Heart right ventricle (tissue), 16 donors: ENCODE measurements at regions of chr4 and their contacts with region 1.

Region 1: DNA sequence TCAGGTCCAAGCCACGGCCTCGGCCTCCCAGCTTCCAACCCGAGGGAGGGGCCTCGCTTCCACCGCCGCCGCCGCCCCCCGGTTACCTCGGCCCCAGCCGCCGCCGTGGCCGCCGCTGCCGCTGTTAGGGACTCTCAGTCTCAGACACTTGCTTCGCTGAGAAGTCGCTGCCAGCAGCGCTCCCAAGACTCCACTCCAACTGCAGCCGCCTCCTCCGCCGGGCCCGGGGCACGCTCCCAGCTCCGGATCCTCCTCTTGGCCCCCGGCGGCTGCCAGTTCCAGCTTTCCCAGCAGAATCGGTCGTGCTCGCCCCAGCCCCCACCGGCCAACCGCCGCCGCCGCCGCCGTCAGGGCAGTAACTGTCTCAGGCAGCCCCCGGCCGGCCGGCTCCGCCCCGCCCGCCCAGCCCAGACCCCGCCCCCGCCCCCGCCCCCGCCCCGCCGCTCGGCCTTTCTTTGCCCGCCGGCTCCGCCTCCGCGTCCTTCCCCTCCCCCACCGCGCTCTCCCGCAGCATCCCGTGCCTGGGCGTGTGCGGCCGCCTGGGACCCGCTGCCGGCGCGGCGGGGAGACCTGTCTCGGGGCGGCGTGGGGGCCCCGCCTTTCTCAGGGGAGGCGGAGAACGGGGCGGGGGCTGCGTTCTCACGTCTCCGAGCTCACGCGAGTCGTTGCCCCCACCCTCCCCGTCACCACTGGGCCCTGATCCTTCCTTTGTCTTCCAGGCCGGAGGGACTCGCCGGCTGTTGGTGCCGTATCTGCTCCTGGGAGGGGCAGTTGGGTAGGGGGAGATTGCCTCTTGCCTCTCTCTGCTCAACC is at the start of gene ANKRD50:
- DNase-seq: peak; percentile 92
- ATAC-seq: peak; percentile 88 to 98 (median 92)
- H3K4me3 ChIP-seq: peak within 1 kb of the TSS; percentile 72 to 93 (median 88)
- H3K27ac ChIP-seq: peak within 1 kb of the TSS; percentile 84 to 99 (median 97)
- H3K4me1 ChIP-seq: peaks cover 0 to 47% (median 20%) of the 10 kb centered on the region in 9 donors
- H3K27me3 ChIP-seq: no peaks in the 10 kb centered on the region
- CTCF ChIP-seq: no peak
- total RNA-seq, gene ANKRD50: 5.2 to 20.1 (median 8.5) TPM

Region 2: DNA sequence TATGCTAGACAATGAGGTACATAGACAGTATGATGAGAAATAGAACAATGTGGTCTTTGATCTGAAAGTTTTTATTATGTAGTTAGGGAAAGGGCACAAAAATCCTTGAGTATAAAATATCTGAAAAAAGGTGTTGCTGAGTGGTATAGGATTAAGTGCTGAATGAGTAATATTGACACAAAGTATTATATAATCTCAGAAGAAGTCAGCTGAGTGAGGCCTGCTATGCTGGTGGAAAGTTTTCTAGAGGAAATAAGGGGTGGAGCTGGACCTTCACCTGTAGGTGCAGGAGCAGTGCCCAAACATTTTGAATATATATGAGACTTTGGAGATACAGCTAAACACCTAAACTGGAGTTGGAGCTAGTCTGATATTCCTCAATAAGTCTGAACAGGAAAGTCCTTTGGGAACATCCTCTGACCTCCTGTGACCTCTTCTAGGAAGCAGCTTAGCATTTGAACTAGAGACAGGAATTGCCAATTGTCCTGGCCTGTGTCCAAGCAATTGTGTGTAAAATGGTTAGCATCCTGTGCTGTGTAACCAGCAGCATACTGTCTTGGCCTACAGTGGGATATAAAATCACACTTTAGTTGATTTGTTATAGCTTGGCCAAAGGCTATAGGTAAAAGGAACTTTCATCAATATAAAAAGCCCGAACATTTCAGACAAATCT is 285.3 kb before region 1 on chr4:
- intact Hi-C with region 1: loop called in 1 of 10 experiments (anchors 5 kb)
- DNase-seq: peak in 1 of 2 donors; percentile 85
- ATAC-seq: peak; percentile 45 to 95 (median 86)
- H3K4me3 ChIP-seq: no peak overlapping the region
- H3K27ac ChIP-seq: peak overlapping the region in 6 of 10 donors; percentile 1 to 67 (median 34)
- H3K4me1 ChIP-seq: peaks cover 0 to 33% (median 9%) of the 10 kb centered on the region in 9 donors
- H3K27me3 ChIP-seq: no peaks in the 10 kb centered on the region
- CTCF ChIP-seq: no peak

Region 3: DNA sequence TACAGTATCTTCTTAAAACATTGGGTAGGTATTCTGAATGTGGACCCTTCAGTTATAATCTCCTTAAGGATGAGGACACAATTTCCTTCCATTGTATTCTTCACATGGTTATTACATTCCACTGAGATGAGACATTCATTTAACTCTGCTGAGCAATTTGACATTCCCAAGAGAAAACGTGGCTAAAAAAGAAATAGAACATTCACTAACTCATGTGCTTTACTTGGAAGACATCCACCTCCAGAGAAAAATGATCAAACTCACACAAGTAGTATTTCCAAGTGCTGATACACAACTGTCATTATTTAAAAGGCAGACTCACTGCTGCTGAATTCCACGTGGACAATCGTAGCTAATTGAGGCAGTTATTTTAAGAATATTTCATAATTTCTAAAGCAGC is 227.8 kb after region 1 on chr4:
- intact Hi-C with region 1: loop called in 6 of 10 experiments (anchors 5 to 10 kb)
- DNase-seq: peak in 1 of 2 donors; percentile 15
- ATAC-seq: peak in 7 of 8 donors; percentile 50 to 86 (median 71)
- H3K4me3 ChIP-seq: no peak overlapping the region
- H3K27ac ChIP-seq: peak overlapping the region in 7 of 10 donors; percentile 7 to 71 (median 40)
- H3K4me1 ChIP-seq: peaks cover 0 to 51% (median 33%) of the 10 kb centered on the region in 9 donors
- H3K27me3 ChIP-seq: no peaks in the 10 kb centered on the region
- CTCF ChIP-seq: no peak